Dorsolateral prefrontal cortex (tissue), 120 donors: ENCODE measurements at regions of chr10 and their contacts with region 1.

Region 1: DNA sequence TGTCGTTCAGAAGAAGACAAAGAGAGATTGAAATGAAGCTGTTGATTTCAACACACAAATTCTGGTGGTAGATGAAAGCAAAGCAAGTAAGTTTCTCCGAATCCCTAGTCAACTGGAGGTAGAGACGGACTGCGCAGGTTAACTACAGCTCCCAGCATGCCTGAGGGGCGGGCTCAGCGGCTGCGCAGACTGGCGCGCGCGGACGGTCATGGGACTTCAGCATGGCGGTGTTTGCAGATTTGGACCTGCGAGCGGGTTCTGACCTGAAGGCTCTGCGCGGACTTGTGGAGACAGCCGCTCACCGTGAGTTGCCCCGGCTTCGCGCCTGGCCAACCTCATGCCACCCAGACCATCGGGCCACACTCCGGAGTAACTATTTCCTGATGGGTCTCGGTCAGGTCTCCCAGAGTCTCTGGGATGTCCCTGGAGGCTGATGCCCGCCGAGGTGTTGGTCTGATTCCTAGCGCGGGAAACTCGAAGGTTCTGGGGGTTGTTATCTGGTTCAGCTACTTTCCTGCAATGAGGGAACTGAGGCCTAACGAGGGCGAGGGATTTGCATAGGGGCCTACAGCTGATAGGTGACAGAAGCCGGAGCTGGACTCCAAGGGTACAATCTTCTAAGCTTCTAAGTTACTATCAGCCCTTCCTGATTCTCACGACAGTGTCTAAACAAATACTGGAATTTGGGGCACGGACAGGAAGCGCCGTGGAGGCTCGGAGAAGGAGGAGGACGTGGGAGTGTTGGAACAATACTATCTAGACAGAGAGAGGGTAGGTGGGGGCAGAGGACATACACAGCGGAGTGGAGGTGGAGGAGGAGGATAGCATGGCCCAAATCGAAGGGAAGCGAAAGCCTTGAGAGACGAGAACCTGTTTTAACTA is at the start of gene RPP30:
- DNase-seq: peak; percentile 83 to 94 (median 90)
- H3K4me3 ChIP-seq: peak within 1 kb of the TSS; percentile 45 to 100 (median 87)
- H3K27ac ChIP-seq: peak within 1 kb of the TSS in 56 of 59 donors; percentile 2 to 94 (median 77)
- H3K27me3 ChIP-seq: no peaks in the 10 kb centered on the region
- CTCF ChIP-seq: peak in 18 of 56 donors; percentile 2 to 42 (median 6)
- total RNA-seq, gene RPP30: 20.3 to 46.7 (median 34.9) TPM

Region 2: DNA sequence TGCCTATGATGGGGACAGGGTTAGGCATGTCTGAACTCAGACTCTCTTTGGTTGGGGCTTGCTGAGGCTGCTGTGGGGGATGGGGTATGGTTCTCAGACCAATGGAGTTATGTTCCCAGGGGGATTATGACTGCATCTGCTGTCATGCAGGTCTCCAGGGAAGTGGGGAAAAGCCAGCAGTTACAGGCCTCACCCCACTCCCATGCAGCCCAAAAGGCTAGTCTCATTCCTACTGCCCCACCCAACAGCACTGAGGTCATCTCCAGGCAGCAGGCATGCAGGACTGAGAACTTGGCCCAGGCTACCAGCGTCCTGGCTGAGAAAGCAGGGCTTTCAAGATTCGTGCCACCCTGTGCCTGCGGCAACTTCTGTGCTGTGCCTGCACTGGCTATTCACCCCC is 387.5 kb before region 1 on chr10:
- intact Hi-C with region 1: no loop called
- DNase-seq: no peak
- H3K4me3 ChIP-seq: no peak overlapping the region
- H3K27ac ChIP-seq: no peak overlapping the region
- H3K27me3 ChIP-seq: peaks cover 0 to 19% (median 0%) of the 10 kb centered on the region in 45 donors
- CTCF ChIP-seq: no peak

Region 3: DNA sequence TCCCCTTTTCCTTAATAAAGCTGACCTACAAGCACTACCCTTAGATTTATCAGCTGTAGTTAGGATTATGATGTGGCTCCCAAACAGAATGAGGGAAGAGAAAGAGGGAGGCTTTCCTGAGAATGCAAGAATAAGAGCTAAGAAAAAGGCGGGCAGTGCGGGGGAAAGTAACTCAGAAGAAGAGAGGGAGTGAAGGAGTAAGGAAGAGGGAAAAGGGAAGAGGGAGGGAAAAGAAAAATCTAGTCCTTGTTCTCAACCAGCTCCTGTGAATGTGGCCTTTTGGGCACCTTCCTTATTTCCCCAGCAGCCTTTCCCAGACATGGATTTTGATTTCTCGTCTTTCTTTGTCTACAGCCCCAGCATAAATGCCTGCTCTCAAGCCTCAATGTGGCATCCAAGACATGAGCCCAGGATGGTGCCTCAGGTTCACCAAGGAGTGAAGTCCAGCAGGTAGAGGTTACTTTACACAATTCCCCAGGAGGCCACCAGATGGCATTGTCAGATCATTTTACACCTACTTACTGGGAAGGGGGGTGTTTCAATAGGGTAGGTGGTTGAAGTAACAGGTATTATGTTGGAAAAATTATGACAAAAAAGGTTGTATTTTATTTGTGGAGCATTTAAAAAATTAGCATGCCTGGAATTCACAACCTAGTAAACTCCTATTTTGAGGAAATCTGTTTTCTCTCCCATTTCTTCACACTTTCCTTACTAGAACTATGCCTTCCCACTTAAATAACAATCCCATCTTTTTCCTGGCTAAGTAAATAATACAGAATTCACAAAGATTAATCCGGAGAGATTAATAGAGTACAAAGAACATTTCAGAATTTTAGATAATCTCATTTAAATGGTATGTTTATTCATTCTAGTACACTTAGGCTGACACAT is 120.7 kb before region 1 on chr10:
- intact Hi-C with region 1: loop called in 1 of 2 experiments (anchors 2 kb)
- DNase-seq: peak in 3 of 10 donors; percentile 7 to 30 (median 21)
- H3K4me3 ChIP-seq: no peak overlapping the region
- H3K27ac ChIP-seq: no peak overlapping the region
- H3K27me3 ChIP-seq: peaks cover 0 to 37% (median 0%) of the 10 kb centered on the region in 45 donors
- CTCF ChIP-seq: peak; percentile 26 to 81 (median 66)

Region 4: GRCh38 chr10:91043173-91043910 is 171.3 kb after region 1 on chr10:
- intact Hi-C with region 1: no loop called
- DNase-seq: no peak
- H3K4me3 ChIP-seq: no peak overlapping the region
- H3K27ac ChIP-seq: no peak overlapping the region
- H3K27me3 ChIP-seq: no peaks in the 10 kb centered on the region
- CTCF ChIP-seq: peak; percentile 27 to 72 (median 52)

Region 5: DNA sequence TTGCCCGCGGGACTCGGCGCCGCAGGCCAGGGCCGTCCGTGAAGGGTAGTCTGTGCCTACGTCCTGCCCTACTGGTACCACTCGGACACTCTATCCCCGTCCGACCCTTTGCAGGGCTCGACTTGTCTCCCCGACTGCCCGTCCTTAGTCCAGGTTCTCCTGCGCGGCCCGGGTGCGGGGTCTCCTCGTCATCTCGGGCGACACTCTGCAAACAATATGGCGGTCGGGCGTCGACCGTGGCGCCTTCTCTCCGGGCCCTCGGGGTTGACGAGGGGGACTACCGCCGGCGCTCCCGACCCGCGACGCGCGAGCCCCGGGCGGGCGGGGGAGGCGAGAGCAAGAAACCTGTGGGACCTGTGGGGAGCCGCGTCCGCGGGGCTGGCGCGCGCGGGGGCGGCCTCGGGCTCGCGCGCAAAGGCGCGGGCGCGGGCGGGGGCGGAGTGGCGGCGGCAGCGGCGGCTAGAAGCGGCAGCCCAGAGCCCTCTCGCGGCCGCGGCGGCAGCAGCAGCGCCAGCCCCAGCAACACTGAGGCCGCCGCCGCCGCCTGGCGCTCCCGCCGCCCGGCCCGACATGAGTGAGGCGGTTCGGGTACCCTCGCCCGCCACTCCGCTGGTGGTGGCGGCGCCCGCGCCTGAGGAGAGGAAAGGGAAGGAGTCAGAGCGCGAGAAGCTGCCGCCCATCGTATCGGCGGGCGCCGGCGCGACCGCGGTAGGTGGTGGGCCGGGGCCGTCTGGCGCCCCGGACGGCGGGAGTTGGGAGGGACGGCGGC is 538.0 kb after region 1 on chr10 and contains the start of gene HECTD2:
- intact Hi-C with region 1: loop called in 1 of 2 experiments (anchors 10 kb)
- DNase-seq: peak; percentile 40 to 88 (median 75)
- H3K4me3 ChIP-seq: peak within 1 kb of the TSS; percentile 63 to 99 (median 89)
- H3K27ac ChIP-seq: peak within 1 kb of the TSS; percentile 92 to 100 (median 99)
- H3K27me3 ChIP-seq: no peaks in the 10 kb centered on the region
- CTCF ChIP-seq: peak in 48 of 56 donors; percentile 2 to 65 (median 41)
- total RNA-seq, gene HECTD2: 13.3 to 40.3 (median 26.3) TPM

Region 6: DNA sequence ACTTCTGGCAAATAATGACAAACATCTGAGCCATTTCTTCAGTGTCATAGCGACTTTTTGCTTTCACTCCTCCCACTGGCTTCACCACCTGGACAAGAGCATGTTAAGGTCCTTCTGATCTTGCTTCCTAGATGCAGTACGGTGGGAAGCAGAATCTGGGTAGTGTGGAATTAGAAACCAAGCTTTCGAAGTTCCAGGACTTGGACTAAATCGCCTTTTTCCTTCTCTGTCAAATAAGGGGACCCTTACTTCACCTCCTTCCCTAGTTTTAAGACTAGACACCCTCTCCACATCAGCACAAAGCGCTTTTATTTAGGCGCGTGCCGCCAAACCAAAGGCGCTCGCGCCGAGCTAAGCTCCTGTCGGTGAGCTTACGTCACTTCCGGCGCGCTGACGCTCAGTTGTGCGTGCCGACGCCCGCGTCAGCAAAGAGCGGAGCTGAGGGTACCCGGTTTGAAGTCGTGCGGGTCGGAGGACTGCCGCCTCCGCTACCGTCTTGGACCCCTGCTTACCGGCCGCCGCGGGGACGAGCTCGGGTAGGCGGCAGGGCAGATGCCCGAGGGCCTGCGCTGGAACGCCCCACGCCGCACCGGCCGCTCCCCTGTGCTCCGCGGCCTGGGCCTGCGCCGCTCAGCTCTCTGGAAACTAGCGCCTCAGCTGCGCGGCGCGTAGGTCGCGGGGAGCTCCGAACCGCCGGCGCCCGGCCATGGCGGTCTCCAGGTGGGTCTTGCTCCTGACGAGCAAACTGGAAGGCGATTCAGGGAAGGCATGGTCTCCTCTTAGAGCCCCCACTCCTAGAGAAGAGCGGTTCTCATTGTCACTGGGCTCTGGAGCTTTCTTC is 1051.6 kb after region 1 on chr10 and contains the start of gene BTAF1:
- intact Hi-C with region 1: loop called in 1 of 2 experiments (anchors 10 kb)
- DNase-seq: peak; percentile 89 to 97 (median 94)
- H3K4me3 ChIP-seq: peak within 1 kb of the TSS; percentile 39 to 100 (median 91)
- H3K27ac ChIP-seq: peak within 1 kb of the TSS; percentile 56 to 99 (median 93)
- H3K27me3 ChIP-seq: no peaks in the 10 kb centered on the region
- CTCF ChIP-seq: peak in 33 of 56 donors; percentile 13 to 55 (median 31)
- total RNA-seq, gene BTAF1: 28.2 to 65.3 (median 40.9) TPM